Activated CD4-positive, alpha-beta T cell treated with anti-CD3 and anti-CD28 coated beads, Interleukin-2, amount 10 ng/mL, durations not matched to agents 24 days and 14 days (primary cell): ENCODE measurements at regions of chr1 and their contacts with region 1.

Region 1: GRCh38 chr1:181142096-181142958 is 53.8 kb downstream of the IER5 start:
- DNase-seq: peak; percentile 97
- H3K4me3 Mint-ChIP-seq: peak overlapping the region; percentile 70
- H3K27ac Mint-ChIP-seq: peak overlapping the region; percentile 90
- H3K4me1 Mint-ChIP-seq: peaks cover 63% of the 10 kb centered on the region
- H3K27me3 Mint-ChIP-seq: peaks cover 16% of the 10 kb centered on the region

Region 2: GRCh38 chr1:180502360-180503273 is 639.7 kb before region 1 on chr1 and contains the start of gene ACBD6:
- intact Hi-C with region 1: loop called (anchors 5 kb)
- DNase-seq: peak; percentile 96
- H3K4me3 Mint-ChIP-seq: peak within 1 kb of the TSS; percentile 97
- H3K27ac Mint-ChIP-seq: peak within 1 kb of the TSS; percentile 97
- H3K4me1 Mint-ChIP-seq: peaks cover 20% of the 10 kb centered on the region
- H3K27me3 Mint-ChIP-seq: peaks cover 5% of the 10 kb centered on the region
- total RNA-seq, gene ACBD6: 49.8 and 54.7 TPM in 2 replicates

Region 3: GRCh38 chr1:180981596-180982387 is 160.5 kb before region 1 on chr1:
- intact Hi-C with region 1: loop called (anchors 5 kb)
- DNase-seq: peak; percentile 90
- H3K4me3 Mint-ChIP-seq: peak overlapping the region; percentile 58
- H3K27ac Mint-ChIP-seq: peak overlapping the region; percentile 86
- H3K4me1 Mint-ChIP-seq: peaks cover 36% of the 10 kb centered on the region
- H3K27me3 Mint-ChIP-seq: no peaks in the 10 kb centered on the region

Region 4: DNA sequence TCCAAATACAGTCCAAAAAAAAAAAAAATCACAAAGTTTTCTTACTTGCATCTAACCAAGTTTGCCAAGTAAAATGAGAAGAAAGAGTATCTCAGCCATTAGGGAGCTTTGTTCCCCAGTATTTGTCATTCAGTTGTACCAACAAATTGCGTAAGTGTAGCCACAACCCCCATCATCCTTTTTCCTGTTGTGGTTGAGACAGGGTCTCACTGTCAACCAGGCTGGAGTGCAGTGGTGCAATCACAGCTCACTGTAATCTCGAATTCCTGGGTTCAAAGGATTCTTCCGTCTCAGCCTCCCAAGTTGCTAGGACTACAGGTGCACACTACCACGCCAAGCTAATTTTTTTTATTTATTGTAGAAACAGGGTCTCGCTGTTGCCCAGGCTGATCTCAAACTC is 129.2 kb before region 1 on chr1:
- intact Hi-C with region 1: no loop called
- DNase-seq: no peak
- H3K4me3 Mint-ChIP-seq: peak overlapping the region; percentile 34
- H3K27ac Mint-ChIP-seq: no peak overlapping the region
- H3K4me1 Mint-ChIP-seq: peaks cover 13% of the 10 kb centered on the region
- H3K27me3 Mint-ChIP-seq: no peaks in the 10 kb centered on the region

Region 5: DNA sequence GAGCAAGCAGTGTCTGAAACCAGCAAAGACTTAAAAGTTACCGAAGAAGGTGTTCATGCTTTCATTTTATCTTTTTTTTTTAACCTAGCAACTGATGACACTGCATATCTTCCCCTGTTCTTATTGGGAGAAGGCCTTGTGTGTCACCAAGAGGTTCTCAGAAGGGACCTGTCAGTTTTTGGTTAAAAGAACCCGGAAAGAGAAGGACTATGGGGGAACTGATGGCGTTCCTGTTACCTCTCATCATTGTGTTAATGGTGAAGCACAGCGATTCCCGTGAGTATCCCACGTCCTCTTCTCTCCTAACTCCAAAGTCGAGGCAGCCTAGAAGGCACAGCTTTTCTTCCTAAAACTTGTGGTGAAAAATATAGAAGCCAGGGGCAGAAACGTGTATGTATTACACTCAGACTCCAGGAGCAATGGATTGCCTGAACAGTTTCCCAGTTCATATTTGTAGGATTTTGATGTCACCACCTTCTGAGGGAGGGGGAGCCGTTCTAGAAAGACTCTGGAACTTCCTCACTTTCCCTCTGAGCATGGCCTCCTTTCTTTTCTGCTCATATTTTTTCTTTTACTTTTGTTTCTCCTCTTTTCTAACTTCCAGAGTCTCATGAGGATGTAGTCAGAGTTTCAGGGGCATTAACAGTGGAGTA is 108.4 kb before region 1 on chr1 and contains the start of gene MR1:
- intact Hi-C with region 1: loop called (anchors 1 kb)
- DNase-seq: peak; percentile 88
- H3K4me3 Mint-ChIP-seq: peak within 1 kb of the TSS; percentile 96
- H3K27ac Mint-ChIP-seq: peak within 1 kb of the TSS; percentile 97
- H3K4me1 Mint-ChIP-seq: peaks cover 51% of the 10 kb centered on the region
- H3K27me3 Mint-ChIP-seq: peaks cover 5% of the 10 kb centered on the region
- total RNA-seq, gene MR1: 14.6 and 16.2 TPM in 2 replicates

Region 6: DNA sequence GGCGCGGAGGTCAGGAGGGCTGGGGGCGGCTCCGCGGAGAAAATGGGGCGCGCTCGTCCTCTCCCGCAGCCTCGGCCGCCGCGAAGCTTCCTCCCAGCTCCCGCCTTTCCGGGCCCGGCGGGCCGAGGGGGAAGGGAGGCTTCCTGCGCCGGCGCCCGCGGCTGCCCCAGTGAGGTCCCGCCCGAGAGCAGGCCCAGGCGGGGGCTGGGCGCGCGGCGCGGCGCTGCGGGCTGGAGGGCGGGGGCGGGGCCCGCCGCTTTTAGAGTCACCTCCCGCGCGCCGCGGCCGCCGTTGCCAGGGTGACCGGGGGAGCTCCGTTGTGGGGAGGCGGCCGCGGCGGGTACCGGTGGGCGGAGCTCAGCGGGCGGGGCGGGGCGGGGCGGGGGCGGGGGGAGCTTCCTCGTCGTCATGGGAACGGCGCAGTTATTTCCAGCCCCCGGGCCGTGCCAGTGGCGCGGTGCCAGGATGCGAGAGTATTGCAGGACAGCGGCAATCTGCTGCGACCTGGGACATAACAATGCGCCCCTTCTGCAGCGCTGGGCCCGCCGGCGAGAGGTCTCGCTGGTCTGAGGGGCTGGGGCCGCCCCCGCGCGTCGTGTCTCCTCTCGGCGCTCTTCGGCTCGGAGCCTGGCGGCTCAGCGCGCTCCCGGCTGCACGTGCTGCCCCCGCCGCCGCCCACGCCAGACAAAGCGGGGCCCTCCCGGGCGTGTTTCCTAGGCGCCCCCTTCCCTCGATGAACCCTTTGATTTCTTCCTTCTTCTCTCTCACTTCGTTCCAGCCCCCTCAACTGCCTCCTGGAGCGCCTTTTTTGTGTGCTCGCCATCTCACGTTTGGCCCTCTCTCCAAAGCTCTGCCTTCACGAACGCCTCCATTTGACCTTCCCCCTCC is 36.9 kb before region 1 on chr1:
- intact Hi-C with region 1: loop called (anchors 1 kb)
- DNase-seq: peak; percentile 97
- H3K4me3 Mint-ChIP-seq: peak overlapping the region; percentile 86
- H3K27ac Mint-ChIP-seq: peak overlapping the region; percentile 90
- H3K4me1 Mint-ChIP-seq: peaks cover 73% of the 10 kb centered on the region
- H3K27me3 Mint-ChIP-seq: peaks cover 40% of the 10 kb centered on the region